Endothelial cell of umbilical vein (primary cell): ENCODE measurements at regions of chr11 and their contacts with region 1.

Region 1: DNA sequence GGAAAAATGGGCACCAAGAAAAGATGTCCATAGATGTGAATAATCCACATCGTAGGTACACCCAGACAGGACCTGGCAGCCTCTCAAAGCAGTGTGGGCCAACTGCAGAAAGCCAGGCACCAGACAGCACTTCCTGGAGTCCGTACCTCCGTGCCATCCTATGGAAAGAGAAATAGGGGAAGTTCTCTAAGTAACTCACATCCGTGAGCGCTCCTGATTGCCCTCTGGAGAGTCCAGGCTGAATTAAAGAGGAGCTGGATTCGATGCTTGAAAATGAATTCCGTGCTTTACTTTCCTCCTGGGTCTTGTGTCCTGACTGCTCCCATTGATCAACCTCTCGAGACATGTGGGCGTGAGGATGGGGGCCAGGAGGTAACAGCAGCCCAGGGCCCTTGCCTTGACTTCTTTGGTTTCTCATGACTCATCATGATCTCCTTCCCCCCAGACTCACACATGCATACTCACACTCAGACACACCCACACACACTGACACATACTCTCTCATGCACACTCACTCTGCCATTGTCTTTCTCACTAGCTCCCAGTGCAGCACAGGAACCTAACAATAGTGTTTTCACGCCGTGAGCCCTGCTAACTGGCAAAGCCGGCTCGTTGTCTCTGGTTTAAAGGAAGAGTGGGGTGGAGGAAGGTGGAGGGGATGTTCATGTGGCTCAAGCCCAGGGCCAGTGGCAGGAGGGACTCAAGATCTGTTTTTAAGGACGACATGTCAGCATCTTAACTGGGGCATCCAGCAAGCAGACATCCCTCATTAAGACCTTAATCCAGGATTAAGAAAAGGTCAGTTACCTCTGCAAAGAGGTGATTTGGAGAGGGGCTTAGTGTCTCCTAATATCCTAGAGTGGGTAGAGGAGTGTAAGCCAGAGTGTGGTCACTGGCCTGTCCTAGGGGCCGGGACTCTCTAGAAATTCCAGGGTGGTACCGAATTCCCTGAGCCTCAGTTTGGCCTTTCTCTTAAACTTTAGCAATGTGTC is 104.2 kb downstream of the SCN3B start:
- DNase-seq: no peak
- H3K4me3 ChIP-seq: no peak overlapping the region
- H3K27ac ChIP-seq: no peak overlapping the region
- H3K4me1 ChIP-seq: no peaks in the 10 kb centered on the region
- H3K27me3 ChIP-seq: no peaks in the 10 kb centered on the region
- CTCF ChIP-seq: no peak
- POLR2A ChIP-seq: no peak

Region 2: DNA sequence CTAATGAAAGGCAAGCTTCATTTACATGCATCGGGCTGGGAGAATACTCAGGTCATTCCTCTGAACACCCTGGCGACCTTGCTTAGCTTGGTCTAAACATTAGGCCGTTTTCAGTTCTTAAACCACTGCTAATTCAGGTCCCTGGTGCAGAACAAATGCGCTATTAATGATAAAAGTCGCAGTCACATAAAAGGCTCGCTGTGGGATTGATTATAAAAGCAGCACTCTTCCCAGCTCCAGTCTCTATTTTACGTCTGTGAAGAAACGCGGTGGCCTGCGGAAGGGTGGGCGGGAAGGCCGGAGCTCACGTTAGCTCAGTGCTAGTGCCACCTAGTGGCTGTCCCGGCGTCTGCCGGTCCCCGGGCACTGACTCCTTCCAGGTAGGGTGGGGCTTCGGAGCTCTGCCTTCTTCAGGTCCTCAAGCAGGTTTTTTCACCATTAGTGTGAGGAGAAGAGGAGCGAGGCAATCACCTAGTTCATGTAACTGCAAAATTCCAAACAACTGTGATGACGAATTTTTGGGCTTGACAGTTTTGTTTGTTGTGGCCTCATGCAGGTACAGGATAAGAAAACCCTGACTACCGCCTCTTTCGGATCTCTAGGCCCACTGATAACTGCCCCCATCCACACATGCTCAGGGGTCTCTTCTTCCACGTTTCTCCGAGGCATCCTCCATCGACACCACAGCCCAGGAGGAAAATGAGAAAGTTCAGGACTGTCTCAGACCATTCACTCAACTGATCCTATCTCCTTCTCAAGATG is 288.7 kb before region 1 on chr11:
- CTCF ChIA-PET with region 1: no interaction called
- POLR2A ChIA-PET with region 1: no interaction called
- dilution Hi-C with region 1: no loop called
- intact Hi-C with region 1: no loop called
- DNase-seq: peak; percentile 68
- H3K4me3 ChIP-seq: peak overlapping the region in 1 of 3 experiments; percentile 38
- H3K27ac ChIP-seq: no peak overlapping the region
- H3K4me1 ChIP-seq: no peaks in the 10 kb centered on the region
- H3K27me3 ChIP-seq: peaks cover 4 to 5% of the 10 kb centered on the region in 2 experiments
- CTCF ChIP-seq: peak; percentile 94 to 98
- POLR2A ChIP-seq: no peak

Region 3: GRCh38 chr11:123413636-123414035 is 136.6 kb before region 1 on chr11:
- CTCF ChIA-PET with region 1: no interaction called
- POLR2A ChIA-PET with region 1: no interaction called
- dilution Hi-C with region 1: no loop called
- intact Hi-C with region 1: no loop called
- DNase-seq: no peak
- H3K4me3 ChIP-seq: no peak overlapping the region
- H3K27ac ChIP-seq: no peak overlapping the region
- H3K4me1 ChIP-seq: peaks cover 1% of the 10 kb centered on the region
- H3K27me3 ChIP-seq: peaks cover 15 to 16% of the 10 kb centered on the region in 2 experiments
- CTCF ChIP-seq: no peak
- POLR2A ChIP-seq: no peak

Region 4: GRCh38 chr11:123511037-123511870 is 39.0 kb before region 1 on chr11:
- CTCF ChIA-PET with region 1: interaction called, 22 read pairs
- POLR2A ChIA-PET with region 1: no interaction called
- dilution Hi-C with region 1: no loop called
- intact Hi-C with region 1: loop called (anchors 1 kb)
- DNase-seq: peak; percentile 83
- H3K4me3 ChIP-seq: no peak overlapping the region
- H3K27ac ChIP-seq: no peak overlapping the region
- H3K4me1 ChIP-seq: peaks cover 8% of the 10 kb centered on the region
- H3K27me3 ChIP-seq: no peaks in the 10 kb centered on the region
- CTCF ChIP-seq: peak; percentile 93 to 97
- POLR2A ChIP-seq: no peak